MCF 10A (cell line): ENCODE measurements at regions of chr10 and their contacts with region 1.

Region 1: GRCh38 chr10:103080891-103081581 is 112.0 kb downstream of the NT5C2 start:
- DNase-seq: peak; percentile 41
- H3K4me3 Mint-ChIP-seq: no peak overlapping the region
- H3K27ac Mint-ChIP-seq: no peak overlapping the region
- H3K4me1 Mint-ChIP-seq: no peaks in the 10 kb centered on the region
- H3K27me3 Mint-ChIP-seq: no peaks in the 10 kb centered on the region
- CTCF ChIP-seq: no peak

Region 2: GRCh38 chr10:103333925-103334520 is 253.0 kb after region 1 on chr10:
- CTCF ChIA-PET with region 1: interaction called, 3 read pairs
- POLR2A ChIA-PET with region 1: no interaction called
- intact Hi-C with region 1: loop called (anchors 10 kb)
- DNase-seq: peak; percentile 36
- H3K4me3 Mint-ChIP-seq: no peak overlapping the region
- H3K27ac Mint-ChIP-seq: no peak overlapping the region
- H3K4me1 Mint-ChIP-seq: no peaks in the 10 kb centered on the region
- H3K27me3 Mint-ChIP-seq: no peaks in the 10 kb centered on the region
- CTCF ChIP-seq: peak; percentile 44